ENCODE measurements at regions of chr4 and their contacts with region 1.

Region 1: GRCh38 chr4:4859390-4859842 is at the start of gene MSX1:
- DNase-seq: peak; percentile 64
- H3K4me3 Mint-ChIP-seq: peak within 1 kb of the TSS; percentile 61
- H3K27ac Mint-ChIP-seq: no peak within 1 kb of the TSS
- H3K4me1 Mint-ChIP-seq: peaks cover 46% of the 10 kb centered on the region
- H3K27me3 Mint-ChIP-seq: peaks cover 77% of the 10 kb centered on the region
- total RNA-seq, gene MSX1: not detected

Region 2: DNA sequence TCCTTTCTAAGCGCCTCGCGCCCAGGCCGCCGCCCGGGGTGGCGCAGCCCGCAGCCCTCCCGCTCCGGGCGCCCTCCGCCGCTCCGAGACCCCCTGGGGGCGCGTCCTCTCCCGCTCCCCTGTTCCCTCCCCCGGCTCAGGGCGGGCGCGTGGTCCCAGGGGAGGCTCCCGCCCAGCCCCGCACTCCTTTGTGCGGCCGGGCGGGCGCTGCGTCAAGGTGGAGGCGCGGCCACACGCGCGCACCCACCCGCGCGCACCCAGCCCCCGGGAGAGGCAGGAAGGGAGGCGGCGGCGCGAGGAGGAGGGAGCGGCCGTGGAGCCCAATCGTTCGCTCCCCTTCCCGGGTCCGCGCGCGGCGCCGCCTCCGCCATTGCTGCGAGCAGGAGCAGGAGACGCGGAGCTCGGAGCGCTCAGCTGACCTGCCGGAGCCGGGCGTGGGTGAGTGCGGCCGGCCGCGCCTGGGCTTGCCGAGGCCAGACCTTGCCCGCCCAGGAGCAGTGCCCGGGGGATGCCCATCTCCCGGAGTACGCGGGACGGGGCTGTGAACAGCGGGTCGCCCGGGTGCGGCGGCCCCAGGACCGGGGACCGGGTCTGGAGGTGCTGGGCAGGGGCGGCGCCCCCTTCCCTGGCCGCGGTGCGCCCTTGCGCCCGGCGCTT is 472.6 kb before region 1 on chr4 and contains the start of gene NSG1:
- CTCF ChIA-PET with region 1: no interaction called
- intact Hi-C with region 1: loop called (anchors 5 kb)
- DNase-seq: peak; percentile 42
- H3K4me3 Mint-ChIP-seq: peak within 1 kb of the TSS; percentile 72
- H3K27ac Mint-ChIP-seq: no peak within 1 kb of the TSS
- H3K4me1 Mint-ChIP-seq: peaks cover 12% of the 10 kb centered on the region
- H3K27me3 Mint-ChIP-seq: peaks cover 22% of the 10 kb centered on the region
- total RNA-seq, gene NSG1: 1.9 to 2.1 TPM

Region 3: GRCh38 chr4:4659871-4660651 is 199.4 kb before region 1 on chr4:
- CTCF ChIA-PET with region 1: no interaction called
- intact Hi-C with region 1: loop called (anchors 10 kb)
- DNase-seq: no peak
- H3K4me3 Mint-ChIP-seq: no peak overlapping the region
- H3K27ac Mint-ChIP-seq: no peak overlapping the region
- H3K4me1 Mint-ChIP-seq: no peaks in the 10 kb centered on the region
- H3K27me3 Mint-ChIP-seq: no peaks in the 10 kb centered on the region

Region 4: GRCh38 chr4:4726051-4726450 is 133.4 kb before region 1 on chr4:
- CTCF ChIA-PET with region 1: no interaction called
- intact Hi-C with region 1: no loop called
- DNase-seq: no peak
- H3K4me3 Mint-ChIP-seq: no peak overlapping the region
- H3K27ac Mint-ChIP-seq: no peak overlapping the region
- H3K4me1 Mint-ChIP-seq: no peaks in the 10 kb centered on the region
- H3K27me3 Mint-ChIP-seq: no peaks in the 10 kb centered on the region

Region 5: DNA sequence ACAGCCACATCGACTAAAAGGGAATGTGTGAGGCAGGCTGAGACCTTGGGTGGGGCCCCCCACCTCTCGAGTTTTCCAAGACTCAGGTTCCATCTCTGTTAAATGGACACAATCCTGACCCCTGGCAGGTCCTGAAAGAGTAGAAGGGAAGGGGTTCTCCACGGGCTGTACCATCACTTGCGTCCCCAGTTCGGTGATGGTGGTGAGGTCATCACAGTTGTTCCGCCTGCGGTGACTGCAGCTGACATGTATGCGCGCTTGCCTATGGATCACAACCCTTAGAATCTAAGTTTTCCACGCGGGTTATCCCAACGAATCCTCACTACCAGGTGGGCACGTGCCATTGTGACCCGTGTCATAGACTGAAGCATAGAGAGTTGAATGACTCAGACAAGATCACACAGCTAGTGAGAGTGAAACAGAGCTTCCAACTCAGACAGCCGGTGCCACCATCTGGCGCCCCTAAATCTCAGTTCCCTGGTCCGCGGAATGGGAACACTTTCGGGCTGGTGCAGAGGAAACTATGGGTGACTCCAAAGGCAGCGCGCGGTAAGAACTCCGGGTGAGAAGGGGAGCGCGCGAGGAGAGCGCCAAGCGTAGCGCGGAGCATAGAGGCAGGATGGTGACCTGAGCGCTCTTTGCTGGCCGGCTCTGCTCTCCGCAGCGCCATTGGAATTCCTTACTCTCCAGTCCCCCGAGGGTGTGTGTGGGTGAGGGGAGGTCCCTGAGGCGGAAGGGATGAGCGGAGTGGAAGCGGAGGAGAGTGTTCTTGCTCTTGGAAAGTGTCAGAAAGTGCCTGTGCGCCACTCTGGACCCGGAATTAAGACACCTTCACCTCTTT is 10.5 kb after region 1 on chr4:
- CTCF ChIA-PET with region 1: no interaction called
- intact Hi-C with region 1: loop called (anchors 1 kb)
- DNase-seq: no peak
- H3K4me3 Mint-ChIP-seq: no peak overlapping the region
- H3K27ac Mint-ChIP-seq: no peak overlapping the region
- H3K4me1 Mint-ChIP-seq: peaks cover 21% of the 10 kb centered on the region
- H3K27me3 Mint-ChIP-seq: peaks cover 78% of the 10 kb centered on the region

Region 6: GRCh38 chr4:5024673-5025072 is 165.3 kb after region 1 on chr4:
- CTCF ChIA-PET with region 1: no interaction called
- intact Hi-C with region 1: no loop called
- DNase-seq: no peak
- H3K4me3 Mint-ChIP-seq: no peak overlapping the region
- H3K27ac Mint-ChIP-seq: no peak overlapping the region
- H3K4me1 Mint-ChIP-seq: no peaks in the 10 kb centered on the region
- H3K27me3 Mint-ChIP-seq: peaks cover 7% of the 10 kb centered on the region